GM10248 (cell line): ENCODE measurements at regions of chr5 and their contacts with region 1.

Region 1: GRCh38 chr5:135466178-135467050 is 14.3 kb upstream of the TIFAB start:
- DNase-seq: peak; percentile 85
- CTCF ChIP-seq: peak; percentile 82

Region 2: GRCh38 chr5:135476615-135477582 is 10.5 kb after region 1 on chr5:
- CTCF ChIA-PET with region 1: interaction called, 22 read pairs
- POLR2A ChIA-PET with region 1: no interaction called
- DNase-seq: no peak
- CTCF ChIP-seq: no peak

Region 3: DNA sequence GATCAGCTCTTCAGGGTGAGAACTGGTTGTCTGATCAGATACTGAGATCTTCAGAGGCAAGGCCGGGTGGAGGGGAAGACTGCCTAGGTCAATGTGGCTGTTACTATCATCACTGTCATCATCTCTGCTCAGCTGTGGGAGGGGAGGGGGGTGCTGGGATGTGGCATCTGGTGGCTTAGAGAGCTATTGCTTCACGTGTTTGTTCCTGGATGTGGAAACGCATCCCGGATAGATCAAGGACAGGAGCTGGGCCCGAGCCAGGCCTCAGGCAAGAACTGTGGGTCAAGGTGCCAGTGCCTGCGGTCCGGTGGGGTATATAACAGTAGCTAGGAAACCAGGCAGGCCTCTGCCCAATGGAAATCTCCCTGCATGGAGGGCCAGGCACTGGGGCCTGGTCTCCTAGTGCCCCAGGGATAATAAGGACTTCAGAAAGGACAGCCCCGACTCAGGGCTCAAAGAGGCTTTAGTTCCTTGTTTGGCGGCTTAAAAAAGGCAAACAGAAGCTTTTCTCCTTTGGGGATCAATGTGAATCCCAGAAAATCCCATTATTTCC is 16.0 kb after region 1 on chr5:
- CTCF ChIA-PET with region 1: interaction called, 22 read pairs
- POLR2A ChIA-PET with region 1: no interaction called
- DNase-seq: no peak
- CTCF ChIP-seq: no peak

Region 4: DNA sequence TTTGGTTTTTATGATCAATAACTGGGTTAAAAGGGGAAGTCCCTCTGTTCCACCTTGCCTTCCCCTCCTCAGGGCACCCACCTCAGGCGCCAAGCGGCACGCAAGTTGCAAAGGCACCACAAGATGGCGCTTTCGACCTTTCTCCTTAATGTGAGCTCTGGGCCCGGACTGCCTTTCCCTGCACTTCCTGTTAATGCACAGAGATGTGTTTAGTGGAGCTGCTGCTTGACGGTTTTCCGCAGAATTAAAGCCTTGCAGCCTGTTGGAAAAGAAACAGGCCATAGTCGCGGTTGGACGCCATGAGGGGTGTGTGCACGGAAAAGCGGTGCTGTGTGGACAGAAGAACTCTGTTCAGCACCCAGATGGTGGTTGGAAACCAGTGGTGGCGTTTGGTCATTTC is 94.4 kb after region 1 on chr5:
- CTCF ChIA-PET with region 1: interaction called, 914 read pairs
- POLR2A ChIA-PET with region 1: no interaction called
- DNase-seq: peak; percentile 80
- CTCF ChIP-seq: peak; percentile 81

Region 5: GRCh38 chr5:137361280-137361679 is 1894.9 kb after region 1 on chr5:
- CTCF ChIA-PET with region 1: no interaction called
- POLR2A ChIA-PET with region 1: no interaction called
- DNase-seq: no peak
- CTCF ChIP-seq: no peak